ENCODE measurements at regions of chr7 and their contacts with region 1.

Region 1: DNA sequence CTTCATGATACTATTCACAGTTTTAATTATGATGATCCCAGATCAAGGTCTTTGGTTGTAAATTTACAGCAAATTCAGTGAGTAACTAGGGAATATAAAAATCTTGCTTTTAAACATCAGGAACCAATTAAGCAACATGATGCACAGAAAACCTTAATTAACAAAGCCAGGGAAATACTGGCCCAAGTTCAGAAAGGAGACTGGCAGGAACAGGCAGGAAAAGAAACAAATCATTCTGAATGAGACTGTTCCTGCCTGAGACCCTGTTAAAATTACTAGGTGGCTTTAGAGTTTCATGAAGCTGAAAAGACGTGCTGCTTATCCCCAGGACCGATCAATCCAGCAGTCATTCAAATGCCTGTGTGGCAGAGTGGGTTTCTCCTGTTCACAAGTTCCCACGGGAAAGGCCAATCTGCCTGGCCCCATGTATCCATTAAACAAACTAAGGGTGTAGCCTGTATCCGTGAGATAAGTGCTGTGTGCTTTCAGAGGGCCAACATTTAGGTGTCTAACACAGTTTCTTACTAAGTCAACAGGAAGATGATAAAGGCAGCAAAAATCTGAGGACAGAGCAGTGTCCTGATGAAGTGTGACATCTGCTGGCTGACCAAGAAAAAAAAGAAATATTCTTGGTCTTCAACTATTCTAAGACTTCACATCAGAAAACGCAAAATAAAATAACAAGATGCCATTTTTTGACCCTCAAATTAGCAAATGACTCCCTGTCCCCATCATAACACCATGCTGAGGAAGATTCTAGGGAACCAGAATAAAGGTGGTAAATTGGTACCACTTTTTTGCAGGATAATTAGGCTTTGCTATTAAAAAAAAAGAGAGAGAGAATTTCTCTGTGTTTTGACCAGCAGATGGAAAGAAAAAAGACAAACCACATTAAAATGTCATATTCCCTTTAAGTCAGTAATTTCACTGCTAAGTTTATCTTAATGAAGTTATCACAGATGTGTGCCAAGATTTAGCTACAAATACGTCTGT is 34.2 kb downstream of the PUS7 start:
- DNase-seq: peak; percentile 100
- H3K4me3 ChIP-seq: peak overlapping the region in 1 of 3 experiments; percentile 10
- H3K27ac ChIP-seq: peak overlapping the region; percentile 98
- H3K4me1 ChIP-seq: peaks cover 29% of the 10 kb centered on the region
- H3K27me3 ChIP-seq: no peaks in the 10 kb centered on the region
- CTCF ChIP-seq: peak; percentile 22 to 39
- POLR2A ChIP-seq: peak; percentile 78

Region 2: DNA sequence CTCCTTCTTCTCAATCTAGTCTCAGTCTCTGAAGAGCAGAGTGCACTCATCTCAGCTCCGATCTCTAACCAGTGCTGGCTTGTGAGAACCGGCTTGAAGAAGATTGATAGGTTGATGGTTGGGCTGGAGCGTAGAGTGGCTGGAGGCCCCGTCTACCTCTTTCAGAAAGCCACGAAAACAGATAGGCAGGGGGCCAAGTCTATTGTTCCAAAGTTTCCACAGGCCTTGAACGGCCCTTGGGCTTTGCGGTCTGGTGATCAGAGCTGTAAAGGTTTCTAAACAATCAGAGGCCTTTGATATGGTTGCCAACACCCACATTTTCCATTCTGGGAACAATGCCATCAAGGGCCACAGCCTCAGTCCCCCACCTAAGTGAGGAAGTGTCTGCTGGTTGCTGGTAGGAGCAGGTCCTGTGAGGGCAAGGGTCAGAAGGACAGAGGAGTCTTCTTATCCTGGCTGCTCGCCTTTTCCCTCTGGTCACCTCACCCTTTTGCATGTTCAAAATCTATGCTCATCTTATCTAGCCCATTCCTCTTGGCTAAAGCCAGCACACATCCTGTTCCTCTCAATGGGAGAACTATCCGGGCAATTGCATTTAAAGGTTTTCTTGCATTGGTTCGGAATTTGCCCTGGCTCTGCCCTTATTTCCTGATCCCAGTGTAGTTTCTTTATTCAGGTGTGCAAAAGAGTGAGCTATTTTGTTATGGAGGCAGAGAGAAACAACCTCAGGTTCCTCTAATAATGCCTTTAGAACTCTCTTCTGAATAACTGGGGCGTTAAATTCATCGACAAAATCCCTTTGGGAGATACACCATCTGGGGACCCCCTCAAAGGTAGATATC is 544.2 kb before region 1 on chr7:
- CTCF ChIA-PET with region 1: no interaction called
- POLR2A ChIA-PET with region 1: no interaction called
- dilution Hi-C with region 1: no loop called
- intact Hi-C with region 1: loop called (anchors 1 kb)
- DNase-seq: peak; percentile 100
- H3K4me3 ChIP-seq: no peak overlapping the region
- H3K27ac ChIP-seq: peak overlapping the region; percentile 86
- H3K4me1 ChIP-seq: peaks cover 35% of the 10 kb centered on the region
- H3K27me3 ChIP-seq: no peaks in the 10 kb centered on the region
- CTCF ChIP-seq: no peak
- POLR2A ChIP-seq: no peak

Region 3: GRCh38 chr7:105399043-105399725 is 88.7 kb before region 1 on chr7:
- CTCF ChIA-PET with region 1: interaction called, 4 read pairs
- POLR2A ChIA-PET with region 1: no interaction called
- dilution Hi-C with region 1: no loop called
- intact Hi-C with region 1: loop called (anchors 1 kb)
- DNase-seq: peak; percentile 75
- H3K4me3 ChIP-seq: no peak overlapping the region
- H3K27ac ChIP-seq: no peak overlapping the region
- H3K4me1 ChIP-seq: peaks cover 12% of the 10 kb centered on the region
- H3K27me3 ChIP-seq: no peaks in the 10 kb centered on the region
- CTCF ChIP-seq: peak in 1 of 2 donors; percentile 29
- POLR2A ChIP-seq: no peak

Region 4: GRCh38 chr7:105439174-105439893 is 48.5 kb before region 1 on chr7:
- CTCF ChIA-PET with region 1: no interaction called
- POLR2A ChIA-PET with region 1: no interaction called
- dilution Hi-C with region 1: no loop called
- intact Hi-C with region 1: loop called (anchors 1 kb)
- DNase-seq: peak; percentile 92
- H3K4me3 ChIP-seq: no peak overlapping the region
- H3K27ac ChIP-seq: peak overlapping the region; percentile 36
- H3K4me1 ChIP-seq: peaks cover 9% of the 10 kb centered on the region
- H3K27me3 ChIP-seq: no peaks in the 10 kb centered on the region
- CTCF ChIP-seq: peak in 1 of 2 donors; percentile 4
- POLR2A ChIP-seq: no peak

Region 5: DNA sequence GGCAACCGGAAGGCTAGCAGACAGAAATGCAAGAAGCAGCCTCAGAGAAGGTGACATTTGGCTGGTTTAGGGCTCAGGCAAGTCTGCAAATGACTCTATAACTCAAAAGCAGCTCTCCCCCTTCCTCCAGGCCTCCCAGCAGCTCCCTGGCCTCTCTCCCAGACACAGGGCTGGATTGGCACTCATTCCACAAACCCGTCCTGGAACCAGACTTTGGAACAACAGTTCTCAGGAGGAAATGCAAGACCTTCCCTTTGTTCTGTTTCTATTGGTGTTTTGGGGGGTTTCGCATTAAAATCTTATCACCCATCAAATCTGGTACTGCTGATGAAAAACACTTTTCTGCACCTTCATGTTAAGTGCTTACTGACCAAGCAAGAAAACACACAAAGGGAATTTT is 133.7 kb after region 1 on chr7:
- CTCF ChIA-PET with region 1: no interaction called
- POLR2A ChIA-PET with region 1: no interaction called
- dilution Hi-C with region 1: no loop called
- intact Hi-C with region 1: no loop called
- DNase-seq: peak; percentile 21
- H3K4me3 ChIP-seq: no peak overlapping the region
- H3K27ac ChIP-seq: no peak overlapping the region
- H3K4me1 ChIP-seq: no peaks in the 10 kb centered on the region
- H3K27me3 ChIP-seq: no peaks in the 10 kb centered on the region
- CTCF ChIP-seq: no peak
- POLR2A ChIP-seq: no peak

Measured in endothelial cell of umbilical vein (primary cell).